ENCODE measurements at regions of chr1 and their contacts with region 1.

Region 1: GRCh38 chr1:228165372-228166169 is at the start of gene IBA57:
- DNase-seq: peak; percentile 99 to 100 (median 100)
- ATAC-seq: peak; percentile 89
- H3K4me3 ChIP-seq: peak within 1 kb of the TSS; percentile 79
- H3K4me3 Mint-ChIP-seq: peak within 1 kb of the TSS; percentile 76 to 92 (median 88)
- H3K27ac ChIP-seq: peak within 1 kb of the TSS; percentile 97
- H3K27ac Mint-ChIP-seq: peak within 1 kb of the TSS; percentile 87 to 98 (median 98)
- H3K4me1 ChIP-seq: peaks cover 14 to 39% of the 10 kb centered on the region in 2 donors
- H3K4me1 Mint-ChIP-seq: peaks cover 10 to 65% (median 48%) of the 10 kb centered on the region in 7 donors
- H3K27me3 ChIP-seq: no peaks in the 10 kb centered on the region
- H3K27me3 Mint-ChIP-seq: no peaks in the 10 kb centered on the region
- total RNA-seq, gene IBA57: 9.3 to 17.1 (median 10.9) TPM

Region 2: DNA sequence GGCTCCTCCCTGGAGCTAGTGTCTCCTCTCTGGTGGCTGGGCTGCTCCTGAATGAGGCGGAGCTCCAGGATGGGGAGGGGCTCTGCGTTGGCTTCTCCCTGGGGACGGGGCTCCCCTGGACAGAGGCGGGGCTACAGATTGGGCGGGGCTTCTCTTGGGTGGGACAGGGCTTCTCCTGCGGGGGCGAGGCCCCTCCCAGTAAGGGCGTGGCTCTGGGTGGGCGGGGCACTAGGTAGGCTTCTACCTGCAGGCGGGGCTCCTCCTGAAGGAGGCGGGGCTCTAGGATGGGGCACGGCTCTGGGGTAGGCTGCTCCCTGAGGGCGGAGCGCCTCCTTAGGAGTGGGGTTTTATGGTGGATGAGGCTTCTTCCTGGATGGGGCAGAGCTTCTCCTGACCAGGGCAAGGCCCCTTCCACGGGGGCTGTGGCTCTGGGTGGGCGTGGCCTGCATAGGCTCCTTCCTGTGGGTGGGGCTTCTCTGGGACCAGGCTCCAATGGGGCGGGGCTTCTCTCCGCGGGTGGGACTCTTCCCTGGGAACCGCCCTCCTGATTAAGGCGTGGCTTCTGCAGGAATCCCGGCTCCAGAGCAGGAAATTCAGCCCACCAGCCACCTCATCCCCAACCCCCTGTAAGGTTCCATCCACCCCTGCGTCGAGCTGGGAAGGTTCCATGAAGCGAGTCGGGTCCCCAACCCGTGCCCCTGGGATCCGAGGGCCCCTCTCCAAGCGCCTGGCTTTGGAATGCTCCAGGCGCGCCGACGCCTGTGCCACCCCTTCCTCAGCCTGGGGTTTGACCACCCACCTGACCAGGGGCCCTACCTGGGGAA is 105.7 kb before region 1 on chr1:
- CTCF ChIA-PET with region 1: no interaction called
- POLR2A ChIA-PET with region 1: no interaction called
- intact Hi-C with region 1: loop called in 1 of 2 experiments (anchors 1 kb)
- DNase-seq: peak in 6 of 9 donors; percentile 42 to 76 (median 52)
- ATAC-seq: peak; percentile 73
- H3K4me3 ChIP-seq: peak overlapping the region; percentile 48
- H3K4me3 Mint-ChIP-seq: peak overlapping the region; percentile 58 to 82 (median 66)
- H3K27ac ChIP-seq: no peak overlapping the region
- H3K27ac Mint-ChIP-seq: peak overlapping the region in 4 of 9 donors; percentile 51 to 70 (median 60)
- H3K4me1 ChIP-seq: peaks cover 5 to 19% of the 10 kb centered on the region in 2 donors
- H3K4me1 Mint-ChIP-seq: peaks cover 6 to 15% (median 7%) of the 10 kb centered on the region in 7 donors
- H3K27me3 ChIP-seq: peaks cover 9 to 30% of the 10 kb centered on the region in 2 donors
- H3K27me3 Mint-ChIP-seq: peaks cover 21 to 50% (median 38%) of the 10 kb centered on the region in 5 donors

Region 3: DNA sequence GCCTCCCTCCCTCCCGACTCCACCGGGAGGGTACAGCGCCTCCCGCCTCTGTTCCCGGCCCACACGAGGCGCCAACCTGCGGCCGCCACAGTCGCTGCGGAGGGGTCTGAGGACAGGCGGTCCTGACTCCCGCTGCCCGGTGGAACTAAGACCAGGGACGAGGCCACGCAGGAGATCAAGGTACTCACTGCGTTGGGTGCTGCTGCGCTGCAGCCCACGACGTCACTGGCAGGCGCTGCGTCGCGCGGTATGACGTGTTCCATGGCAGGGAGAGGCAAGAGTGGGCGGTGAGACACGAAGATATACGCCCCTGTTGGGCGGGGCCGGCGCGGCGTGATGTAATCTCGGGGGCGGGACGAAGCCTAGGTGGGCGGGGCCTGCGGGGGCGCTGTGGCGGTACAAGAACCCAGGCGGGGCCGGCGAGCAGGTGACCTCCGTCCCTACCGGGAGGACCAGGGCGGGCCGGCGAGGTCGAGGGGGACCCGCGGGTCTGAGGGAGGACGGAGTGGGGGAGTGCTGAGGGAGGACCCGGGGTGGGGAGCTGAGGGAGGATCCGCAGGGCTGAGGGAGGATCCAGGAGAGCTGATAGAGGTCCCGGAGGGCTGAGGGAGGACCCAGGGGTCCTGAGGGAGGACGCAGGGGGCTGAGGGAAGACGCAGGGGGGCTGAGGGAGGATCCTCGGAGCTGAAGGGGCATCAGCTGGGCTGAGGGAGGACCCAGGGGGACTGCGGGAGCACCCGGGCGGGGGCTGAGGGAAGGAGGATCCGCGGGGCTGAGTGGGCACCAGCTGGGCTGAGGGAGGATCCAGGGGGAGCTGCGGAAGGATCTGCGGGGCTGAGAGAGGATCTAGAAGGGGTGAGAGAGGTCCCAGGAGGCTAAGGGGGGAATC is 56.3 kb before region 1 on chr1 and contains the start of gene MRPL55:
- CTCF ChIA-PET with region 1: interaction called, 3 read pairs
- POLR2A ChIA-PET with region 1: interaction called, 10 read pairs
- intact Hi-C with region 1: loop called (anchors 1 kb)
- DNase-seq: peak; percentile 97 to 100 (median 99)
- ATAC-seq: peak; percentile 99
- H3K4me3 ChIP-seq: peak within 1 kb of the TSS; percentile 100
- H3K4me3 Mint-ChIP-seq: peak within 1 kb of the TSS; percentile 87 to 95 (median 93)
- H3K27ac ChIP-seq: peak within 1 kb of the TSS; percentile 94
- H3K27ac Mint-ChIP-seq: peak within 1 kb of the TSS; percentile 88 to 98 (median 95)
- H3K4me1 ChIP-seq: peaks cover 9 to 16% of the 10 kb centered on the region in 2 donors
- H3K4me1 Mint-ChIP-seq: peaks cover 5 to 37% (median 26%) of the 10 kb centered on the region in 7 donors
- H3K27me3 ChIP-seq: no peaks in the 10 kb centered on the region
- H3K27me3 Mint-ChIP-seq: peaks cover 0 to 3% (median 0%) of the 10 kb centered on the region in 5 donors
- total RNA-seq, gene MRPL55: 34.3 to 79.3 (median 65.2) TPM

Region 4: DNA sequence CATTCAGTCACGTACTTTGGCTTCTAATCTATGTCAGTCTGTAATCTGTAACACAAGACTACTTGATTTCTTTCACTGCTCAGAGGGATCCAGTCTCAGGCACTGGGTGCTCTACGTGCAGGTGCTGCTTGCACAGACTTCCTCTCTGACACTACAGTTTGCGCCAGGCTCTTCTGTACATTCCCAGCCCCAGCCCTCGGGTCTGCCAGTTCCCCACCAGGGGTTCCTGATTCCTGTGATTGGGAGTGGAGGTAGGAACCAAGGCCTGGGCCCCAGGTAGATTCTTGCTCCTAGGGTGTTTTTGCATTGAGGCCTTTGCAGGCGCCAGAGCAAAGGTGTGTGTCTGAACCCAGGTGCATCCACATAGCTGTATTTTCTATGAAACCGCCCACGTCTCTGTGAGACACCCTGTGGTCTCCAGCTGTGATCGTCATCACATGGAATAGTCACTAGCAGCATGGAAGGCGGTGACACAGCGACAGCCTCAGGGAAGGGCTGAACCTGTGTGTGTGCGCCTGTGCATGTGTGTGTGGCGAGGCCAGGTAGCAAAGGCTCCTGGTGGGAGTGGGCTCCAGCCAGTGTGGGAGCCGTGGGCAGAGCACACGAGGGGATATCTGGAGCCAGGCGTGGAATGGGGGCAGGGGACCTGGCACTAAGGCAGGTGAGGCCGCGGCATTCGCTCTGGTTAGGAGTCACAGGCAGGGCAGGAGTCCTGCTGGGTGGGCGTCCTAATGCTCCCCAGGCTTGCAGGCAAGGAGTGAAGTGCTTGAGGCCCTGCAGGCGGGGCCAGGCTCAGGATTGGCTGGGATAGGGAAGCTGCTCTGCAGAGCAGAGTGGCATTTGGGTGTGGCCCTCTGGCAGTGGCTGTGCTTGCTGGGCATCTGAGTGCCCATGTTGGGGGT is 10.7 kb before region 1 on chr1:
- CTCF ChIA-PET with region 1: interaction called, 5 read pairs
- POLR2A ChIA-PET with region 1: interaction called, 19 read pairs
- intact Hi-C with region 1: loop called in 1 of 2 experiments (anchors 1 kb)
- DNase-seq: peak in 1 of 9 donors; percentile 42
- ATAC-seq: no peak
- H3K4me3 ChIP-seq: no peak overlapping the region
- H3K4me3 Mint-ChIP-seq: peak overlapping the region in 3 of 10 donors; percentile 12 to 47 (median 31)
- H3K27ac ChIP-seq: peak overlapping the region; percentile 27
- H3K27ac Mint-ChIP-seq: peak overlapping the region in 7 of 9 donors; percentile 24 to 89 (median 64)
- H3K4me1 ChIP-seq: peaks cover 0 to 7% of the 10 kb centered on the region in 2 donors
- H3K4me1 Mint-ChIP-seq: peaks cover 0 to 20% (median 12%) of the 10 kb centered on the region in 7 donors
- H3K27me3 ChIP-seq: no peaks in the 10 kb centered on the region
- H3K27me3 Mint-ChIP-seq: no peaks in the 10 kb centered on the region

Region 5: DNA sequence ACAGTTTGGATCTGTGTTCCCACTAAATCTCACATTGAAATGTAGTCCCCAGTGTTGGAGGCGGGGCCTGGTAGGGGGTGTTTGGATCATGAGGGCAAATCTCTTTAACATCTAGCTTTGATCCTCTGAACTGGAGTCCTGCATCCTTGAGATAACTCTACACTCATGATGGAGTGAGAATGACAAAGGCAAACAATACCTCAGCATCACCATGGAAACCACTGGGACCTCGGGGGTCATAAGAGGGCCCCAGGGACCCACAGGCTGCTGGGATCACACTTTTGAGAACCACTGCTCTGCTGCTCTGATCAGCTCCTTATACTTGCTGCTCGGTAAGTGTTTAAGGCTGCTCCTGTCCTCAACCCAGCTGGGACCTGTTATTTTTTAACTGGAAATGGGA is 28.9 kb after region 1 on chr1:
- CTCF ChIA-PET with region 1: no interaction called
- POLR2A ChIA-PET with region 1: no interaction called
- intact Hi-C with region 1: no loop called
- DNase-seq: no peak
- ATAC-seq: no peak
- H3K4me3 ChIP-seq: no peak overlapping the region
- H3K4me3 Mint-ChIP-seq: no peak overlapping the region
- H3K27ac ChIP-seq: no peak overlapping the region
- H3K27ac Mint-ChIP-seq: no peak overlapping the region
- H3K4me1 ChIP-seq: no peaks in the 10 kb centered on the region
- H3K4me1 Mint-ChIP-seq: no peaks in the 10 kb centered on the region
- H3K27me3 ChIP-seq: no peaks in the 10 kb centered on the region
- H3K27me3 Mint-ChIP-seq: no peaks in the 10 kb centered on the region

Region 6: GRCh38 chr1:228405987-228406265 is 240.4 kb after region 1 on chr1:
- CTCF ChIA-PET with region 1: interaction called, 4 read pairs
- POLR2A ChIA-PET with region 1: no interaction called
- intact Hi-C with region 1: loop called (anchors 1 kb)
- DNase-seq: no peak
- ATAC-seq: no peak
- H3K4me3 ChIP-seq: peak overlapping the region; percentile 74
- H3K4me3 Mint-ChIP-seq: peak overlapping the region; percentile 80 to 99 (median 94)
- H3K27ac ChIP-seq: peak overlapping the region; percentile 86
- H3K27ac Mint-ChIP-seq: peak overlapping the region; percentile 36 to 92 (median 80)
- H3K4me1 ChIP-seq: peaks cover 36 to 41% of the 10 kb centered on the region in 2 donors
- H3K4me1 Mint-ChIP-seq: peaks cover 46 to 77% (median 56%) of the 10 kb centered on the region in 7 donors
- H3K27me3 ChIP-seq: no peaks in the 10 kb centered on the region
- H3K27me3 Mint-ChIP-seq: no peaks in the 10 kb centered on the region

Region 7: GRCh38 chr1:228500901-228501871 is 335.6 kb after region 1 on chr1:
- CTCF ChIA-PET with region 1: no interaction called
- POLR2A ChIA-PET with region 1: no interaction called
- intact Hi-C with region 1: no loop called
- DNase-seq: peak; percentile 72 to 89 (median 85)
- ATAC-seq: peak; percentile 99
- H3K4me3 ChIP-seq: peak overlapping the region; percentile 44
- H3K4me3 Mint-ChIP-seq: peak overlapping the region; percentile 71 to 86 (median 80)
- H3K27ac ChIP-seq: no peak overlapping the region
- H3K27ac Mint-ChIP-seq: peak overlapping the region in 5 of 9 donors; percentile 19 to 72 (median 66)
- H3K4me1 ChIP-seq: peaks cover 9 to 14% of the 10 kb centered on the region in 2 donors
- H3K4me1 Mint-ChIP-seq: peaks cover 9 to 31% (median 18%) of the 10 kb centered on the region in 7 donors
- H3K27me3 ChIP-seq: no peaks in the 10 kb centered on the region
- H3K27me3 Mint-ChIP-seq: peaks cover 0 to 8% (median 0%) of the 10 kb centered on the region in 5 donors

Region 8: DNA sequence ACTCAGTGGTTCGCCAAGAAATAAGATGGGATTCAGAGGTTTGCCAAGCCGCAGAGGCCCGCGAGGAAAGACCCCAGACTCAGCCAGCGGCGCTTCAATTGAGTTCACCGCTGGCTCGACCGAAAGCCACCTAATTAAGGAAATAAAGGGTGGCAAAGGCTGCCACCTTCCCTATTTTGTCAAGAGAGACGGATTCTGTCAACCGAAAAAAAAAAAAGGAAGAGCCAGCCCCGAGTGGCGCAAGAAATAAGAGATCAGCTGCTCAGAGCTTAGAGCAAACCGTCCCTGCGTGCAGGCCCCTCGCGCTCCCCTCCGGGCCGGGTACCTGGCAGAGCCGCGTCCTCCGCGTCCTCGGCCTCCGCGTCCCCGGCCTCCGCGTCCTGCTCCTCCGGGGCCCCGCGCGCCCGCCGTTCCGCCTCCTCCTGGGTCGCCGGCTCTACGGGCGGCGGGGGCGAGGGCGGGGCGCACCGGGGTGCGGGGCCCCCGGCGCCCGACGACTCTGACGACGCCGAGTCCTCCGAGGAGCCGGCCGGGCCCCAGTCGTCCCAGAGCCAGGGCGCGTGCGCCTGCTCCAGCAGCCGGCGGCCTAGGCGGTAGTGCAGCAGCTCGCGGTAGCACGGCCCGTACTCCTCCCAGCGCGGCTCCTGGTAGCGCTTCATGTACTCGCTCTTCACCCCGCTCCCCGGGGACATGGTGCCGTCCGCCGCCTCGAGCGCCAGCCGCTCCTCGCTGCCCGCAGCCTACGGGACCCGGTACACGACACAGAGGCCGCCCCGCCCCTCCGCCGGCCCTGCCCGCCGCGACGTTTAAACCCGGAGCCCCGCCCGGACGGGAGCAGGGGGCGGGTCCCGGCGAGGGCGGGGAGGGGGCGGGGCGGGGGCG is 1176.4 kb after region 1 on chr1:
- CTCF ChIA-PET with region 1: no interaction called
- POLR2A ChIA-PET with region 1: no interaction called
- intact Hi-C with region 1: loop called in 1 of 2 experiments (anchors 10 kb)
- DNase-seq: peak; percentile 78 to 87 (median 84)
- ATAC-seq: peak; percentile 92
- H3K4me3 ChIP-seq: peak overlapping the region; percentile 87
- H3K4me3 Mint-ChIP-seq: peak overlapping the region; percentile 88 to 96 (median 93)
- H3K27ac ChIP-seq: peak overlapping the region; percentile 88
- H3K27ac Mint-ChIP-seq: peak overlapping the region; percentile 72 to 93 (median 89)
- H3K4me1 ChIP-seq: peaks cover 5 to 7% of the 10 kb centered on the region in 2 donors
- H3K4me1 Mint-ChIP-seq: peaks cover 32 to 59% (median 49%) of the 10 kb centered on the region in 7 donors
- H3K27me3 ChIP-seq: no peaks in the 10 kb centered on the region
- H3K27me3 Mint-ChIP-seq: peaks cover 0 to 23% (median 7%) of the 10 kb centered on the region in 5 donors